ENCODE measurements at regions of chr9 and their contacts with region 1.

Region 1: GRCh38 chr9:133375724-133376654 is at the starts of genes STKLD1 and SURF4:
- DNase-seq: peak; percentile 88 to 97 (median 94)
- ATAC-seq: peak; percentile 74
- H3K4me3 ChIP-seq: peak within 1 kb of the TSS; percentile 67 to 76
- H3K4me3 Mint-ChIP-seq: peak within 1 kb of the TSS; percentile 92
- H3K27ac ChIP-seq: peak within 1 kb of the TSS; percentile 78 to 91
- H3K27ac Mint-ChIP-seq: peak within 1 kb of the TSS; percentile 95
- H3K4me1 ChIP-seq: peaks cover 40% of the 10 kb centered on the region
- H3K4me1 Mint-ChIP-seq: peaks cover 39% of the 10 kb centered on the region
- H3K27me3 ChIP-seq: no peaks in the 10 kb centered on the region
- H3K27me3 Mint-ChIP-seq: no peaks in the 10 kb centered on the region
- CTCF ChIP-seq: no peak
- total RNA-seq, gene STKLD1: 0.92 to 1.8 TPM
- total RNA-seq, gene SURF4: 228 TPM

Region 2: GRCh38 chr9:132877824-132878694 is 497.9 kb before region 1 on chr9 and contains the start of gene AK8:
- CTCF ChIA-PET with region 1: no interaction called
- POLR2A ChIA-PET with region 1: no interaction called
- intact Hi-C with region 1: loop called in 1 of 2 experiments (anchors 5 kb)
- DNase-seq: peak; percentile 55 to 88 (median 73)
- ATAC-seq: peak; percentile 88
- H3K4me3 ChIP-seq: peak within 1 kb of the TSS; percentile 96 to 98
- H3K4me3 Mint-ChIP-seq: peak within 1 kb of the TSS; percentile 81
- H3K27ac ChIP-seq: peak within 1 kb of the TSS; percentile 63 to 73
- H3K27ac Mint-ChIP-seq: peak within 1 kb of the TSS; percentile 88
- H3K4me1 ChIP-seq: peaks cover 14% of the 10 kb centered on the region
- H3K4me1 Mint-ChIP-seq: peaks cover 17% of the 10 kb centered on the region
- H3K27me3 ChIP-seq: no peaks in the 10 kb centered on the region
- H3K27me3 Mint-ChIP-seq: no peaks in the 10 kb centered on the region
- CTCF ChIP-seq: no peak
- total RNA-seq, gene AK8: not detected

Region 3: DNA sequence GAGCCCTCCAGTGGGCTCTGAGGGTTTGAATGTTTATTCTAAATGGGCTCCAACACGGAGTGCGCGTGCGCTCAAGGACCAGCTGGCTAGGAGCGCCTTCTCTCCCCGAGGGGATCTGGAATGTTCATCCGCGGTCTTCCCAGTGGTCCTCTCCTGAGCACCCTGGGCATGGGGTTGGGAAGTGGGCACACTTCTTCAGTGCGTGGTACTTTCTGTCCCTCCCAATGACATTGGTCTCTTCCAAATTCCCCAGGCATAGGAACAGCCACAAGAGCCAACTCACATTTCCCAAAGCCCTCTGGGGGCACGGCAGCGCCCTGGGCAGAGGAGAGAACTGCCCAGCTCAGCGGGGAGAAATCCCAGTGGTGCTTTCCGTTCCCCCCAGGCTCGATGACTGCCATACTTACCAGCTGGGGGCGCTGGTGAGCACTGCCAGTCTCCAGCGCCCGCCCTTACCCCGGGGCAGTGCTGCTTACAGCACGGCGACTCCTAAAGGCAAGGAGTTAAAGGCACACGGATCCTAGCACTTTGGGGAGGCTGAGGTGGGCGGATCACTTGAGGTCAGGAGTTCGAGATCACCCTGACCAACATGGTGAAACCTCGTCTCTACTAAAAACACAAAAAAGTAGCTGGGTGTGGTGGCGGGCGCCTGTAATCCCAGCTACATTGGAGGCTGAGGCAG is 137.0 kb before region 1 on chr9:
- CTCF ChIA-PET with region 1: interaction called, 4 read pairs
- POLR2A ChIA-PET with region 1: no interaction called
- intact Hi-C with region 1: loop called in 1 of 2 experiments (anchors 1 kb)
- DNase-seq: peak; percentile 26 to 78 (median 67)
- ATAC-seq: peak; percentile 92
- H3K4me3 ChIP-seq: peak overlapping the region; percentile 36 to 50
- H3K4me3 Mint-ChIP-seq: peak overlapping the region; percentile 76
- H3K27ac ChIP-seq: no peak overlapping the region
- H3K27ac Mint-ChIP-seq: no peak overlapping the region
- H3K4me1 ChIP-seq: peaks cover 17% of the 10 kb centered on the region
- H3K4me1 Mint-ChIP-seq: peaks cover 10% of the 10 kb centered on the region
- H3K27me3 ChIP-seq: peaks cover 0 to 7% of the 10 kb centered on the region in 2 experiments
- H3K27me3 Mint-ChIP-seq: peaks cover 13% of the 10 kb centered on the region
- CTCF ChIP-seq: peak; percentile 72

Region 4: GRCh38 chr9:133347985-133348717 is 27.8 kb before region 1 on chr9 and contains the starts of genes MED22 and RPL7A:
- CTCF ChIA-PET with region 1: interaction called, 25 read pairs
- POLR2A ChIA-PET with region 1: interaction called, 22 read pairs
- intact Hi-C with region 1: loop called (anchors 1 kb)
- DNase-seq: peak; percentile 80 to 97 (median 91)
- ATAC-seq: peak; percentile 85
- H3K4me3 ChIP-seq: peak within 1 kb of the TSS; percentile 95 to 100
- H3K4me3 Mint-ChIP-seq: peak within 1 kb of the TSS; percentile 100
- H3K27ac ChIP-seq: peak within 1 kb of the TSS; percentile 87 to 93
- H3K27ac Mint-ChIP-seq: peak within 1 kb of the TSS; percentile 98
- H3K4me1 ChIP-seq: peaks cover 23% of the 10 kb centered on the region
- H3K4me1 Mint-ChIP-seq: peaks cover 39% of the 10 kb centered on the region
- H3K27me3 ChIP-seq: no peaks in the 10 kb centered on the region
- H3K27me3 Mint-ChIP-seq: no peaks in the 10 kb centered on the region
- CTCF ChIP-seq: no peak
- total RNA-seq, gene MED22: 17.8 to 21.2 TPM
- total RNA-seq, gene RPL7A: 2,612 to 2,623 TPM

Region 5: DNA sequence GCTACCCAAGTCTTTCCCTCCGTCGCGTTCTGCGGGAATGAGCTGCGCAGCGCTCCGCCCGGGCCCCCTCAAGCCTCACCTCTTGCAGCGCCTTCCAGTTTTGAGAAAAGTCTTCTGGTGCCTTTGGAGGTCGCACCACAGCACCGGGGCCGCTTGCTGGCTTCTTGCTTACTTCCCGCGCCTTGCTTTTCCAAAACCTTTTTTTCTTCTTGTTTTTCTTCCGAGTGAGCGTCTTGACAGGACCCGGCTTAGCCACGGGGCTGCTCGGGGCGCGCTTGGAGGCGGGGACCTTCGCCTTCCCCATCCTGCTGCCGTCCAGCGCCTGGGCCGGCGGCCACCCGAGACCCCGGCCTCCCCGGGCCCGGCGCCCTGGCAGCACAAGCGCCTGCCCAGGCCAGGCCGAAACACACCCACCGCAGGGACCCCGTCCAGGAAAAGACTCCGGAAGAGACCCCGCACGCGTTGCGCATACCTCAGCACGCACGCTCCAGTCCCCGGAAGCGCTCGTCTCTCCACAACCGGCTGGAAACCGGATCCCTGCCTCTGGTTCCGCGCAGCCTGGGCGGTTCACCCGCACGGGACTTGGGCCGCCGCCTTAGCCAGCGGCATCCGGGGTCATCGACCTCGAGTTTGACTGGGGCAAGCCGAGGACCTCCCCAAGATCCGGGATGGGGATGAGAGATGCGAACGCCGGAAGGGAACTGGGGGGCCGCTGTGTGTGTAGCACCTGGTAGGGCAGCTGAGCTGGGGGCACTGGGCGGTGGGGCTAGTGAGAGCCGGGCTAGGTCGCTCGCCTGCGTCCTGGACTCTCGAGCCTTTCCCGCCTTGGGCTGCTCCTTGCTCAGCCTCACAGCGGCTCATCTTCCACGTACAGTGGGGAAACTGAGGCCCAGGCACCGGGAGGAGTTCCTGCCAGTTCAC is 41.8 kb after region 1 on chr9 and contains the start of gene REXO4:
- CTCF ChIA-PET with region 1: interaction called, 3 read pairs
- POLR2A ChIA-PET with region 1: no interaction called
- intact Hi-C with region 1: loop called (anchors 1 to 5 kb)
- DNase-seq: peak; percentile 73 to 91 (median 81)
- ATAC-seq: peak; percentile 88
- H3K4me3 ChIP-seq: peak within 1 kb of the TSS; percentile 80 to 88
- H3K4me3 Mint-ChIP-seq: peak within 1 kb of the TSS; percentile 87
- H3K27ac ChIP-seq: peak within 1 kb of the TSS; percentile 68 to 89
- H3K27ac Mint-ChIP-seq: peak within 1 kb of the TSS; percentile 90
- H3K4me1 ChIP-seq: peaks cover 23% of the 10 kb centered on the region
- H3K4me1 Mint-ChIP-seq: peaks cover 54% of the 10 kb centered on the region
- H3K27me3 ChIP-seq: no peaks in the 10 kb centered on the region
- H3K27me3 Mint-ChIP-seq: no peaks in the 10 kb centered on the region
- CTCF ChIP-seq: no peak
- total RNA-seq, gene REXO4: 22.5 to 24.0 TPM

Region 6: GRCh38 chr9:134024828-134025605 is 649.0 kb after region 1 on chr9 and contains the start of gene BRD3OS:
- CTCF ChIA-PET with region 1: no interaction called
- POLR2A ChIA-PET with region 1: no interaction called
- intact Hi-C with region 1: loop called in 1 of 2 experiments (anchors 1 kb)
- DNase-seq: peak; percentile 81 to 98 (median 90)
- ATAC-seq: peak; percentile 96
- H3K4me3 ChIP-seq: peak within 1 kb of the TSS; percentile 71 to 92
- H3K4me3 Mint-ChIP-seq: peak within 1 kb of the TSS; percentile 80
- H3K27ac ChIP-seq: peak within 1 kb of the TSS; percentile 56 to 65
- H3K27ac Mint-ChIP-seq: peak within 1 kb of the TSS; percentile 45
- H3K4me1 ChIP-seq: peaks cover 11% of the 10 kb centered on the region
- H3K4me1 Mint-ChIP-seq: peaks cover 11% of the 10 kb centered on the region
- H3K27me3 ChIP-seq: no peaks in the 10 kb centered on the region
- H3K27me3 Mint-ChIP-seq: no peaks in the 10 kb centered on the region
- CTCF ChIP-seq: no peak
- total RNA-seq, gene BRD3OS: 3.3 to 4.2 TPM